ENCODE measurements at regions of chr4 and their contacts with region 1.

Region 1: DNA sequence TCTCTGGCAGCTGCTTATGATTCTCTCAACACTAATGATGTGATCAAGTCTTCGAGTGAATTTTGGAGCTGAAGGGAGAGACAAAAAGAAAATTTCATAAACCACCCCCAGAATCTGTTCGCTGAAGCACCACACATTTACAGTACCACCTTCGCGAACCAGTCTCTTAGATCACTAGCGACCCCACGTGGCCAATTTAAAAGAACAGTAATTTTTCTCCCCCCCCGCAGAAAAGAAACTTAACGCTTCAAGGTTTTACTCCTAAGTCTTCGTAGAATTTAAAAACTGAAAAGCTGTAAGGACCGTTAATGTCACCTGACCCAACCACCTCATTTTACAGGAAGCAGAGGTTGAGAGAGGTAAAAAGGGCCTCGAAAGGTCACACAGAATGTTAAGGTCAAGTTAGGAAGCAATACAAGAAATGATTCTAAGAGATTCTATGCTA is 187.5 kb downstream of the QDPR start:
- DNase-seq: peak; percentile 62
- H3K4me3 ChIP-seq: no peak overlapping the region
- H3K27ac ChIP-seq: peak overlapping the region; percentile 34
- H3K27me3 ChIP-seq: no peaks in the 10 kb centered on the region
- CTCF ChIP-seq: peak; percentile 80

Region 2: DNA sequence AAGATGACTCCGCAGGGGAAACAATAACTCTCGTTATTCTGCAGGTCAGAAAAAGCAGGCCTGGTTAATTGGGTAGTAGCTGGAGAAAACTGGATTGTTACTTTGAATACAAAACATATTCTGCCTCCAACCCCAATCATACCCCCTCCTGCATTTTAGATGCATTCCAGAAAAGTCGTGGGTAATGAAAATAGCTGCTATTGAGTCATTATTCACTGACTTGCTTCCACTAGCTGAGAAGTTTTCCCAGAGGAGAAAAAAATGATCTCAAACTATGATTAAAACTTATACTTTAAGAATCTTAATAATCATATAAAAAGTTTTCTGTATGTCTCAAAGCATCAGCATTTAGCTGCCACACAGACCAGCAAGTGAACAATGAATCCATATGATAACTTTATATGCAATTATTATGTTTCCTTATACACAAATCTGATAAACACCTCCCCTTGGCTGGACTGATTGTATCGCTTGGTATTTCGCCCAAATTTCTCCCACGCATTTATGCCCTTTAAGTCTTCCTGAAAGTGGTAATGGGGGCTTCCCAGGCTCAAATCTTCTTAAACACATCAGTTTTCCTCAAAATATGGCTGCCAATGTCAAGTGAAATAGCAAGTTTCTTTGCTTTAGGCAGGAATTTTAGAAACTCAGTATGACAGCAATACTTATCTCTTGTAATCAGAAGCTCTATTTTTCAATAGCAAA is 607.0 kb before region 1 on chr4:
- CTCF ChIA-PET with region 1: interaction called, 11 read pairs
- POLR2A ChIA-PET with region 1: no interaction called
- DNase-seq: no peak
- H3K4me3 ChIP-seq: no peak overlapping the region
- H3K27ac ChIP-seq: no peak overlapping the region
- H3K27me3 ChIP-seq: no peaks in the 10 kb centered on the region
- CTCF ChIP-seq: no peak

Region 3: DNA sequence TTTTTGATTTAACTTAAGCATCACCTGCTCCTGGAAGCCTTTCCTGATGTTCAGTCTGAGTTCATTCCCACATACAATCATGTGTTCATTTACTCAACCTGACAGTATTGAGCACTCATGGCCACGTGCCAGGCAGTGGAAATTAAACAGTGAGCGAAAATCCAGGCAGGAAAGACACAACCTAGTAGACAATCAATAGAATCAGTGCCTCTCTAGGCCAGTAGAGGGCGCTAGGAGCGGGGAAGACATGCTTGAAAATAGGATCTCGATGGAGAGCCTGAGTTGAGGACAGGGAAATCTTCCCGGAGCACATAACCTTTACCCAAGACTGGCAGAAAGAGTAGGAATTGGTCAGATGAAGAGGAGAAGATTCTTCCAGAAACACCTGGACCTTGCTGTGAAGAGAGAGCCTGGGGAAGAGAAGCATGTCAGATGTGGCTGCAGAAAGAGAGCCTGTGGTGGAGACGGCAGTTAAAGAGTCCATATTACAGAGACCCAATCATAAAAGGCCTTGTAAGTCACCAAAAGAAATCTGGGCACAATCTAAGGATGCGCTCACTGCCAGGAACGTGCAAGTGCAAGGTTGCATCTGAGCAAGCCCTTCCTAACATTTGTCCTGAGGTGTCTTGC is 529.5 kb before region 1 on chr4:
- CTCF ChIA-PET with region 1: interaction called, 29 read pairs
- POLR2A ChIA-PET with region 1: no interaction called
- DNase-seq: no peak
- H3K4me3 ChIP-seq: no peak overlapping the region
- H3K27ac ChIP-seq: no peak overlapping the region
- H3K27me3 ChIP-seq: no peaks in the 10 kb centered on the region
- CTCF ChIP-seq: peak; percentile 87

Region 4: GRCh38 chr4:16858275-16858752 is 466.1 kb before region 1 on chr4:
- CTCF ChIA-PET with region 1: interaction called, 11 read pairs
- POLR2A ChIA-PET with region 1: no interaction called
- DNase-seq: peak; percentile 79
- H3K4me3 ChIP-seq: no peak overlapping the region
- H3K27ac ChIP-seq: peak overlapping the region; percentile 80
- H3K27me3 ChIP-seq: no peaks in the 10 kb centered on the region
- CTCF ChIP-seq: no peak

Region 5: GRCh38 chr4:17376205-17376604 is 51.8 kb after region 1 on chr4:
- CTCF ChIA-PET with region 1: no interaction called
- POLR2A ChIA-PET with region 1: no interaction called
- DNase-seq: no peak
- H3K4me3 ChIP-seq: no peak overlapping the region
- H3K27ac ChIP-seq: no peak overlapping the region
- H3K27me3 ChIP-seq: peaks cover 3% of the 10 kb centered on the region
- CTCF ChIP-seq: no peak

Region 6: GRCh38 chr4:17447675-17448298 is 123.4 kb after region 1 on chr4:
- CTCF ChIA-PET with region 1: interaction called, 24 read pairs
- POLR2A ChIA-PET with region 1: interaction called, 3 read pairs
- DNase-seq: peak; percentile 50
- H3K4me3 ChIP-seq: no peak overlapping the region
- H3K27ac ChIP-seq: no peak overlapping the region
- H3K27me3 ChIP-seq: no peaks in the 10 kb centered on the region
- CTCF ChIP-seq: peak; percentile 84